ENCODE measurements at regions of chr14 and their contacts with region 1.

Region 1: GRCh38 chr14:105203057-105203531 is 22.0 kb upstream of the NUDT14 start:
- DNase-seq: peak; percentile 58
- ATAC-seq: peak; percentile 89
- H3K4me3 ChIP-seq: no peak overlapping the region
- H3K27ac ChIP-seq: no peak overlapping the region
- H3K4me1 ChIP-seq: peaks cover 1% of the 10 kb centered on the region; the same call in 1 of the 2 replicates
- H3K27me3 ChIP-seq: peaks cover 9% of the 10 kb centered on the region
- CTCF ChIP-seq: peak; percentile 89
- POLR2A ChIP-seq: no peak
- RAD21 ChIP-seq: peak; percentile 74

Region 2: GRCh38 chr14:105168979-105169507 is 34.1 kb before region 1 on chr14:
- CTCF ChIA-PET with region 1: no interaction called
- POLR2A ChIA-PET with region 1: no interaction called
- dilution Hi-C with region 1: no loop called
- in situ Hi-C with region 1: no loop called
- intact Hi-C with region 1: no loop called
- DNase-seq: no peak
- ATAC-seq: peak; percentile 9; the same call in 1 of the 2 replicates
- H3K4me3 ChIP-seq: no peak overlapping the region
- H3K27ac ChIP-seq: no peak overlapping the region
- H3K4me1 ChIP-seq: peaks cover 3% of the 10 kb centered on the region; the same call in 1 of the 2 replicates
- H3K27me3 ChIP-seq: peaks cover 52% of the 10 kb centered on the region
- CTCF ChIP-seq: peak; percentile 41
- POLR2A ChIP-seq: no peak
- RAD21 ChIP-seq: peak; percentile 24; the same call in 1 of the 2 replicates

Region 3: GRCh38 chr14:105281371-105282097 is 78.4 kb after region 1 on chr14:
- CTCF ChIA-PET with region 1: interaction called, 3 read pairs
- POLR2A ChIA-PET with region 1: no interaction called
- dilution Hi-C with region 1: no loop called
- in situ Hi-C with region 1: loop called (anchors 5 kb)
- intact Hi-C with region 1: loop called (anchors 1 kb)
- DNase-seq: peak; percentile 83
- ATAC-seq: peak; percentile 88
- H3K4me3 ChIP-seq: no peak overlapping the region
- H3K27ac ChIP-seq: no peak overlapping the region
- H3K4me1 ChIP-seq: no peaks in the 10 kb centered on the region; the same call in 1 of the 2 replicates
- H3K27me3 ChIP-seq: no peaks in the 10 kb centered on the region
- CTCF ChIP-seq: peak; percentile 86
- POLR2A ChIP-seq: no peak
- RAD21 ChIP-seq: peak; percentile 82

Region 4: DNA sequence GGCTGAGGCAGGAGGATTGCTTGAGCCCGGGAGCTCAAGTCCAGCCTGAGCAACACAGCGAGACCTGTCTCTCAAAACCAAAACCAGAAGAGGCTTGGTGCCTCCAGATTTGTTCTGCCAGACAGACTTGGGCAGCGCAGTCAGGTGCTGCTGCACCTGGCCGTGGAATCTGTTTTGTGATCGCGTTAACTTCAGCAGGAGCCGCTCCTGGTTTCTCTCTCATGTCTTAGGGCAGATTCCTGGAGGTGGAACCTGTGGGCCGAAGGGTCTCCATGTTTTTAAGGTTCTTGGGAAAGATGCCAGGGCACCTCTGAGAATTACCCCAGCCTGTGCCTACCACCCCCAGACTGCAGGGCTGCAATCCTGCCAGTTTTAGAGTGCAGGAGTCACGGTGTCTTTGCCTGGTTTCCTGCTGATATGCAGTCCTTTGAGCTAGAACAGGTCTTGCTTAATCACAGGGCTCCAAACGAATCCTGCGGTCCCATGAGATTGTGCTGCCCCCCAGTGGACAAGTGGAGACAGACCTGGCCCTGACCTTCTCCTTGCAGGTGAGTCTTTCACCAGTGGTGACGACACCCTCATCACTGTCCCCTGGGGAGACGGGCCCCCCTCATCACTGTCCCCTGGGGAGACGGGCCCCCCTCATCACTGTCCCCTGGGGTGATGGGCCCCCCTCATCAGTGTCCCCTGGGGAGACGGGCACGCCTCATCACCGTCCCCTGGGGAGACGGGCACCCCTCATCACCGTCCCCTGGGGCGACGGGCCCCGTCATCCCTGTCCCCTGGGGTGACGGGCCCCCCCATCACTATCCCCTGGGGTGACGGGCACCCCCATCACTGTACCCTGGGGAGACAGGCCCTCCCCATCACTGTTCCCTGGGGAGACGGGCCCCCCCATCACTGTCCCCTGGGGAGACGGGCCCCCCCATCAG is 149.1 kb after region 1 on chr14:
- CTCF ChIA-PET with region 1: interaction called, 6 read pairs
- POLR2A ChIA-PET with region 1: no interaction called
- dilution Hi-C with region 1: no loop called
- in situ Hi-C with region 1: no loop called
- intact Hi-C with region 1: loop called (anchors 1 kb)
- DNase-seq: peak; percentile 85
- ATAC-seq: peak; percentile 95
- H3K4me3 ChIP-seq: no peak overlapping the region
- H3K27ac ChIP-seq: no peak overlapping the region
- H3K4me1 ChIP-seq: peaks cover 2% of the 10 kb centered on the region; the same call in 1 of the 2 replicates
- H3K27me3 ChIP-seq: no peaks in the 10 kb centered on the region
- CTCF ChIP-seq: peak; percentile 91
- POLR2A ChIP-seq: no peak
- RAD21 ChIP-seq: peak; percentile 97

Measured in IMR-90 (cell line).